Heart right ventricle (tissue), 16 donors: ENCODE measurements at regions of chr2 and their contacts with region 1.

Region 1: GRCh38 chr2:24315669-24316068 is 44.7 kb downstream of the ITSN2 start:
- DNase-seq: no peak
- ATAC-seq: no peak
- H3K4me3 ChIP-seq: no peak overlapping the region
- H3K27ac ChIP-seq: no peak overlapping the region
- H3K4me1 ChIP-seq: peaks cover 0 to 39% (median 12%) of the 10 kb centered on the region in 9 donors
- H3K27me3 ChIP-seq: no peaks in the 10 kb centered on the region
- CTCF ChIP-seq: no peak

Region 2: GRCh38 chr2:24164125-24164973 is 151.3 kb before region 1 on chr2:
- intact Hi-C with region 1: no loop called
- DNase-seq: peak in 1 of 2 donors; percentile 28
- ATAC-seq: peak in 4 of 8 donors; percentile 33 to 54 (median 38)
- H3K4me3 ChIP-seq: no peak overlapping the region
- H3K27ac ChIP-seq: no peak overlapping the region
- H3K4me1 ChIP-seq: no peaks in the 10 kb centered on the region
- H3K27me3 ChIP-seq: no peaks in the 10 kb centered on the region
- CTCF ChIP-seq: peak in 8 of 9 donors; percentile 21 to 61 (median 55)

Region 3: GRCh38 chr2:24214880-24215279 is 100.8 kb before region 1 on chr2:
- intact Hi-C with region 1: no loop called
- DNase-seq: no peak
- ATAC-seq: no peak
- H3K4me3 ChIP-seq: no peak overlapping the region
- H3K27ac ChIP-seq: no peak overlapping the region
- H3K4me1 ChIP-seq: no peaks in the 10 kb centered on the region
- H3K27me3 ChIP-seq: no peaks in the 10 kb centered on the region
- CTCF ChIP-seq: no peak

Region 4: GRCh38 chr2:24342110-24342910 is 26.6 kb after region 1 on chr2:
- intact Hi-C with region 1: no loop called
- DNase-seq: no peak
- ATAC-seq: no peak
- H3K4me3 ChIP-seq: no peak overlapping the region
- H3K27ac ChIP-seq: peak overlapping the region in 2 of 10 donors; percentile 10 to 13
- H3K4me1 ChIP-seq: peaks cover 0 to 78% (median 57%) of the 10 kb centered on the region in 9 donors
- H3K27me3 ChIP-seq: no peaks in the 10 kb centered on the region
- CTCF ChIP-seq: no peak

Region 5: GRCh38 chr2:24360050-24360962 is 44.6 kb after region 1 on chr2 and contains the start of gene ITSN2:
- intact Hi-C with region 1: loop called in 3 of 10 experiments (anchors 5 to 10 kb)
- DNase-seq: peak; percentile 75 to 85
- ATAC-seq: peak; percentile 86 to 95 (median 90)
- H3K4me3 ChIP-seq: peak within 1 kb of the TSS; percentile 61 to 100 (median 97)
- H3K27ac ChIP-seq: peak within 1 kb of the TSS; percentile 79 to 99 (median 98)
- H3K4me1 ChIP-seq: peaks cover 4 to 53% (median 35%) of the 10 kb centered on the region in 9 donors
- H3K27me3 ChIP-seq: no peaks in the 10 kb centered on the region
- CTCF ChIP-seq: no peak
- total RNA-seq, gene ITSN2: 32.1 to 49.8 (median 38.2) TPM